ENCODE measurements at regions of chr18 and their contacts with region 1.

Region 1: DNA sequence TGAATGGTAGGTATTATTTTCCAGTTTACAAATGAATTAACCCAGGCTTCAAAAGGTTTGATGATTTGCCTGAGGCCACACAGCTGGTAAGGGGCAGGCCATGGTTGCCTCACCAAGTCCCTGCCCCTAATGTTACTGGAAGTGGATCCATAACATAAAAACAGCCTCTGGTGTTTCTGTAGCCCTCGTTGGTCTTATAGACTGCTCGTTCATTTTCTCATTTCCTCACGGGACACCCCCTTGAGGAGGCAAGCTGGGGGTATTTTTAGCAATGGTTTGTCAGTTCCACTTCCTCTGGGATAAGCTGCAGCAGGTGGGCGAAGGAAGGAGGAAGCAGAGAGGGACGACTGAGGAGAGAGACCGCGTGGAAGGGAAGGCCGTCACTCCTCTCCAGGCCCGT is 32.9 kb upstream of the NDUFV2 start:
- DNase-seq: no peak
- ATAC-seq: no peak
- H3K4me3 Mint-ChIP-seq: no peak overlapping the region
- H3K27ac Mint-ChIP-seq: peak overlapping the region; percentile 27
- H3K4me1 Mint-ChIP-seq: peaks cover 35% of the 10 kb centered on the region
- H3K27me3 Mint-ChIP-seq: no peaks in the 10 kb centered on the region

Region 2: GRCh38 chr18:9038277-9038871 is 31.2 kb before region 1 on chr18:
- CTCF ChIA-PET with region 1: no interaction called
- DNase-seq: no peak
- ATAC-seq: no peak
- H3K4me3 Mint-ChIP-seq: no peak overlapping the region
- H3K27ac Mint-ChIP-seq: no peak overlapping the region
- H3K4me1 Mint-ChIP-seq: peaks cover 5% of the 10 kb centered on the region
- H3K27me3 Mint-ChIP-seq: no peaks in the 10 kb centered on the region

Region 3: DNA sequence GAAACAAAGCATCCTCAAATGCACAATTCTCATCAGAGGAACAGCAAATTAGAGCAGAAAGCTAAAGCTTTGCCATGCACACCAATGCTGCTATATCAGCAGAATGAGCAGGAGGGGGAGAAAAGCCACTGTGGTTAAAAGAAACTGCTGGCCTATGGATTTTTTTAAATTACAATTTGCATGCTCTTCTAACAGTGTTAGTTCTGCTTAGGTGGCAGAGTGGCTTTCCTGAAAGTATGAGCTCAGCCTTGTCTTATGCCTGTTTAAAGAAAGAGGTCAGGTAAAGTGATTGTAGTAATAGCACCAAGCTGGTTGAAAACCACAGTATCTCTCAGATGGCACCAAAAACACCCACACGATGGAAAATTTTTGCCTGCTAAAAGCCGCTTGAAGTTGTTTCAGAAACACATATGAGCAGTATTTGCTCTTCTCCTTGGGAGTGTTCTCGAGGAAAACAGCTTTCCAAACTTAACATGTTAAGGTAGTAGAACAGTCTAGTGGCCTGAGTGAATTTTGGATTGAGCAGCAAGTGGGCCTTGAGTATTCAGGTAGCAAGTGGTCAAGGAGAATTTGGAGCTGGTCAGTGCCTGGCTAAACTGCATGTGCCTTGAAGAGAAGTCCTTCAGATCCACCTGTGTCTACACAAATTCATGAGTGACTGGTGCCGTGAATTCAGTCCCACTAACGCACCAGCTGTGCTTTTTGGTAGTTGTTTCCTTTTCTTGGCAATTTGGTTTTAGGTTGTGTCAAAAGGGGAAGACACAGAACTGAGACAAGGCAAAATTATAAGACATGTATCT is 13.3 kb after region 1 on chr18:
- CTCF ChIA-PET with region 1: interaction called, 14 read pairs
- DNase-seq: peak; percentile 82
- ATAC-seq: peak; percentile 84
- H3K4me3 Mint-ChIP-seq: peak overlapping the region; percentile 53
- H3K27ac Mint-ChIP-seq: peak overlapping the region; percentile 94
- H3K4me1 Mint-ChIP-seq: peaks cover 59% of the 10 kb centered on the region
- H3K27me3 Mint-ChIP-seq: no peaks in the 10 kb centered on the region

Region 4: GRCh38 chr18:9102508-9103375 is 33.1 kb after region 1 on chr18 and contains the start of gene NDUFV2:
- CTCF ChIA-PET with region 1: interaction called, 13 read pairs
- DNase-seq: peak; percentile 99
- ATAC-seq: peak; percentile 92
- H3K4me3 Mint-ChIP-seq: peak within 1 kb of the TSS; percentile 88
- H3K27ac Mint-ChIP-seq: peak within 1 kb of the TSS; percentile 97
- H3K4me1 Mint-ChIP-seq: peaks cover 48% of the 10 kb centered on the region
- H3K27me3 Mint-ChIP-seq: no peaks in the 10 kb centered on the region
- total RNA-seq, gene NDUFV2: 222 to 302 TPM

Region 5: GRCh38 chr18:9109523-9109922 is 39.9 kb after region 1 on chr18:
- CTCF ChIA-PET with region 1: interaction called, 16 read pairs
- DNase-seq: no peak
- ATAC-seq: peak; percentile 28
- H3K4me3 Mint-ChIP-seq: peak overlapping the region; percentile 32
- H3K27ac Mint-ChIP-seq: peak overlapping the region; percentile 70
- H3K4me1 Mint-ChIP-seq: peaks cover 80% of the 10 kb centered on the region
- H3K27me3 Mint-ChIP-seq: no peaks in the 10 kb centered on the region

Region 6: DNA sequence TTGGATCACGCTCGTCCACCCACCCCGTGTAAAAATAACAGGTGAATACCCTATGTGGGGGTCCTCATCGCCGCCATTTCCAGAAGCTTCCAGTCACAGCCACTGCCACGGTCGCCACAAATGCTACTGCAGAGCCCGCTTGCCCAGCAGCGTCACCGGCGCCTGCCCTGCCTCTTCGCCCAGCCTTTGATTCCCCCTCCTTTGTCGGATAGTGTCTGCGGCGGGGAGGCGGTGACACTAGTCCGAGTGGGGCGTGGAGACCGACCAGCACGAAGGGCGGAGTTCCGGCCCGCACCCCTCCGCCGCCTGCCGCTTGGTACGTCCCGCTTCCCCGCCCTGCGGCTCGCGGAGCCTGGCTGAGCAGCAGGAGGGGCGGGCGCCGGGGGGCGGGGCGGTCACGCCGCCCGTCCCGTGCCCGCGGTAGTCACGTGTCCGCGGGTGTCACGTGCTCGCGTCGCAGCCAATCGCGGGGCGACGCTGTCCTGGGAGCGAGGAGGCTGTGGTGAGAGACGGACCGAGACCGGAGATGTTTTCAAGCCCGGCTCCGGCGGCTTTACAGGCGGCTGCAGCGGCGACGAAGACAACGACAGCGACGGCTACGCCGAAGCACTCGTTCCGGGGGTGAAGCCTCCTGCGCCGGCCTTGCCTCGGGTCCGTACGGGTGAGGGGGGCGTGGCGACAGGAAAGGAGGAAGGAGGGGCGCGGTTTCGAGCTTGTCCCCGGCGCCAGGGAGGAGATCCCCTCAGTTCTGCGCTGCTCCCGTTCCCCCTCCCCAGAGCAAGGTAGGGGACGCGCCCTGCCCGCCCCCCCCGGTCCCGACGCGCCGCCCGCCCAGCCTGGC is 66.9 kb after region 1 on chr18 and contains the start of gene ANKRD12:
- CTCF ChIA-PET with region 1: interaction called, 12 read pairs
- DNase-seq: peak; percentile 98
- ATAC-seq: peak; percentile 78
- H3K4me3 Mint-ChIP-seq: peak within 1 kb of the TSS; percentile 95
- H3K27ac Mint-ChIP-seq: peak within 1 kb of the TSS; percentile 98
- H3K4me1 Mint-ChIP-seq: peaks cover 53% of the 10 kb centered on the region
- H3K27me3 Mint-ChIP-seq: no peaks in the 10 kb centered on the region
- total RNA-seq, gene ANKRD12: 67.5 to 76.9 TPM

Region 7: GRCh38 chr18:9147440-9148202 is 78.0 kb after region 1 on chr18:
- CTCF ChIA-PET with region 1: interaction called, 18 read pairs
- DNase-seq: peak; percentile 55
- ATAC-seq: peak; percentile 68
- H3K4me3 Mint-ChIP-seq: peak overlapping the region; percentile 43
- H3K27ac Mint-ChIP-seq: peak overlapping the region; percentile 90
- H3K4me1 Mint-ChIP-seq: peaks cover 71% of the 10 kb centered on the region
- H3K27me3 Mint-ChIP-seq: no peaks in the 10 kb centered on the region

Region 8: GRCh38 chr18:9334329-9334972 is 264.9 kb after region 1 on chr18 and contains the start of gene TWSG1:
- CTCF ChIA-PET with region 1: interaction called, 10 read pairs
- DNase-seq: peak; percentile 96
- ATAC-seq: peak; percentile 92
- H3K4me3 Mint-ChIP-seq: peak within 1 kb of the TSS; percentile 77
- H3K27ac Mint-ChIP-seq: peak within 1 kb of the TSS; percentile 84
- H3K4me1 Mint-ChIP-seq: peaks cover 27% of the 10 kb centered on the region
- H3K27me3 Mint-ChIP-seq: peaks cover 8% of the 10 kb centered on the region
- total RNA-seq, gene TWSG1: 11.2 TPM

Measured in activated CD8-positive, alpha-beta memory T cell treated with anti-CD3 and anti-CD28 coated beads, Interleukin-2, amount 10 ng/mL, durations not matched to agents 7 days and 5 days (primary cell).